ENCODE measurements at regions of chr10 and their contacts with region 1.

Region 1: GRCh38 chr10:73167783-73168464 is at the starts of genes ECD and FAM149B1:
- DNase-seq: peak; percentile 96
- ATAC-seq: peak; percentile 94
- H3K4me3 Mint-ChIP-seq: peak within 1 kb of the TSS; percentile 100
- H3K27ac Mint-ChIP-seq: peak within 1 kb of the TSS; percentile 100
- H3K4me1 Mint-ChIP-seq: peaks cover 37% of the 10 kb centered on the region
- H3K27me3 Mint-ChIP-seq: no peaks in the 10 kb centered on the region
- total RNA-seq, gene ECD: 41.0 to 50.7 TPM
- total RNA-seq, gene FAM149B1: 16.0 to 18.6 TPM

Region 2: GRCh38 chr10:72625608-72626443 is 542.1 kb before region 1 on chr10 and contains the start of gene MICU1:
- CTCF ChIA-PET with region 1: no interaction called
- POLR2A ChIA-PET with region 1: no interaction called
- intact Hi-C with region 1: loop called in 1 of 2 experiments (anchors 10 kb)
- DNase-seq: peak; percentile 98
- ATAC-seq: peak; percentile 99
- H3K4me3 Mint-ChIP-seq: peak within 1 kb of the TSS; percentile 94
- H3K27ac Mint-ChIP-seq: peak within 1 kb of the TSS; percentile 91
- H3K4me1 Mint-ChIP-seq: peaks cover 7% of the 10 kb centered on the region
- H3K27me3 Mint-ChIP-seq: no peaks in the 10 kb centered on the region
- total RNA-seq, gene MICU1: 41.0 to 51.5 TPM

Region 3: DNA sequence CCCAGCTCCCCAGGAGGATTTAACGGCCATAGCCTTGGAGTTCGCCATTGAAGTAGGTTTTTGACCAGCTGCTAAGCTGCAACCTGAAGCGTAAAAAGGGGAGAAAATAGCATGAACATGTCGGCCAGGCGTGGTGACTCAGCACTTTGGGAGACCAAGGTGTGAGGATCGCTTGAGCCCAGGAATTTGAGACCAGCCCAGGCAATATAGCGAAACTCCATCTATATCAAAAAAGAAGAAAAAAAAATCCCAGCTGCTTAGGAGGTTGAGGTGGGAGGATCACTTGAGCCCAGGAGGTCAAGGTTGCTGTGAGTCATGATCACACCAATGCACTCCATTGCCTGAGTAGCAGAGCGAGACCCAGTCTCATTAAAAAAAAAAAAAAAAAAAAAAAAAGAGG is 508.2 kb before region 1 on chr10:
- CTCF ChIA-PET with region 1: no interaction called
- POLR2A ChIA-PET with region 1: no interaction called
- intact Hi-C with region 1: no loop called
- DNase-seq: no peak
- ATAC-seq: no peak
- H3K4me3 Mint-ChIP-seq: no peak overlapping the region
- H3K27ac Mint-ChIP-seq: no peak overlapping the region
- H3K4me1 Mint-ChIP-seq: no peaks in the 10 kb centered on the region
- H3K27me3 Mint-ChIP-seq: peaks cover 2% of the 10 kb centered on the region

Region 4: DNA sequence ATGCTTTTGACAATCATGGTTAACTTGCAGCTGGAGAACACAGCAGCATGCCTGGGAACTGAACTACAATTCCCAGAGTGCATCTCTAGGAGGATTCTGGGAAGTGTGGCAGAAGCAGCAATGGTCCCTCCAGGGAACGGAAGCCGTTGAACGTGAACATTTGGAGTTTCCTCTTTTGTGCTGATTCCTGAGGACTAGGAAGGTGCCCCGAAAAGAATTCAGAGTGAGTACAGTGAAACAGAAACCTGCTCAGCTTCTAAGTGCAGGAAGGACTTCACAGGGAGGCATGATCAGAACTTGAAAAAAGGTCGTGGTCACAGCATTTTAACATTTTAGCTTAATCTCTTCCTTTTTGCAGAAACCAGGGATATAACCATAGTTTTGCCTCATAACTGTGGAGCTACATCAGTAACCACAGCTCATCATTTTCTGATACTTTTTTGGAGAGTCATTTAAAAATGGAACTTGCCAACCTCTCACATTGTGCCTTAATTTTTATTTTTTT is 57.5 kb before region 1 on chr10 and contains the start of gene NUDT13:
- CTCF ChIA-PET with region 1: no interaction called
- POLR2A ChIA-PET with region 1: interaction called, 3 read pairs
- intact Hi-C with region 1: loop called in 1 of 2 experiments (anchors 5 kb)
- DNase-seq: peak; percentile 60
- ATAC-seq: peak; percentile 89
- H3K4me3 Mint-ChIP-seq: peak within 1 kb of the TSS; percentile 71
- H3K27ac Mint-ChIP-seq: peak within 1 kb of the TSS; percentile 90
- H3K4me1 Mint-ChIP-seq: peaks cover 14% of the 10 kb centered on the region
- H3K27me3 Mint-ChIP-seq: no peaks in the 10 kb centered on the region
- total RNA-seq, gene NUDT13: 1.6 to 2.2 TPM

Region 5: DNA sequence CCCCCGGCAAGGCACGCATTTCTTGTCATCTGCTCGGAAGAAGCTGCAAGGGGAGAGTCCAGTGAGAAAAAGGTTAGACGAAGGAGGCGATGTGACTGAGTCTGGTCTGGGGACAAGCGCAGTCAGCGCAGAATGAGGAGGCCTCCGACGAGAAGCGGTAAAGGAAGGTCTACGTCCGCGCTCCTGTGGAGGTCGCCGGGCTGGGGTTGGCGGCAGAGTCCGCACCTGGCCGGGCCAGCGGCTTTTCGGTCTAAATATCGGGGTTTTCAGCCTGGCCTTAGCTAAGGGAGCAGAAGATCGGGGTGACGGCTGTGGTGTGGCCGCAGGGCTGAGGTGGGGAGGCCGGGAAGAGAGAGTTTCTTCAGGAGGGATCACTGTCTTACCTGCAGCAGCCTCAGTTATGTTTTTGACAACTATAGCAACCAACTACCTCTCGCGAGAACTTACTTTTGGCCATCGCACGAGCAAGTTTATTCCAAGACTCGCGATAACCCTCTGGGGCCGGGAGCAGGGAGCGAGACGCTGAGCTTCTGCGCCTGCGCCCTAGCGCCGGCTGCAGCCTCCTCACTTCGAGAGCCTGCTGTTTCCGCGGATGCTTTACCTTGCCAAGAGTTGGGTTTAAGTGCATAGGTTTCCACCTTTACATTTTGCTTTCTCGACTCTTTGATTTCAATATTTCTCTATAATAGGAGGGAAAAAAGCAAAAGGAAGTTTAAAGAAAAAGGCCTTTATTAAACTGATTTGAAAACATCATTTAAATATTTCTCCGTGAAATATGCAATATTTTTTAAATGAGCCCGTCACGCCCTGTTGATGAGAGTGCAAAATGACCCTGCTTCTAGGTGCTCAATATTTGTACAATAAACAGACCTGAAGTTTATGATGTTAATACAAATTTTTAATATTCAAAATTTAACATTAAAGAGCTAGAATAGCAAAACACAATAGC is 190.7 kb after region 1 on chr10 and contains the start of gene CFAP70:
- CTCF ChIA-PET with region 1: no interaction called
- POLR2A ChIA-PET with region 1: no interaction called
- intact Hi-C with region 1: loop called in 1 of 2 experiments (anchors 5 kb)
- DNase-seq: peak; percentile 96
- ATAC-seq: peak; percentile 100
- H3K4me3 Mint-ChIP-seq: peak within 1 kb of the TSS; percentile 97
- H3K27ac Mint-ChIP-seq: peak within 1 kb of the TSS; percentile 84
- H3K4me1 Mint-ChIP-seq: peaks cover 14% of the 10 kb centered on the region
- H3K27me3 Mint-ChIP-seq: no peaks in the 10 kb centered on the region
- total RNA-seq, gene CFAP70: 0.58 to 0.71 TPM

Region 6: DNA sequence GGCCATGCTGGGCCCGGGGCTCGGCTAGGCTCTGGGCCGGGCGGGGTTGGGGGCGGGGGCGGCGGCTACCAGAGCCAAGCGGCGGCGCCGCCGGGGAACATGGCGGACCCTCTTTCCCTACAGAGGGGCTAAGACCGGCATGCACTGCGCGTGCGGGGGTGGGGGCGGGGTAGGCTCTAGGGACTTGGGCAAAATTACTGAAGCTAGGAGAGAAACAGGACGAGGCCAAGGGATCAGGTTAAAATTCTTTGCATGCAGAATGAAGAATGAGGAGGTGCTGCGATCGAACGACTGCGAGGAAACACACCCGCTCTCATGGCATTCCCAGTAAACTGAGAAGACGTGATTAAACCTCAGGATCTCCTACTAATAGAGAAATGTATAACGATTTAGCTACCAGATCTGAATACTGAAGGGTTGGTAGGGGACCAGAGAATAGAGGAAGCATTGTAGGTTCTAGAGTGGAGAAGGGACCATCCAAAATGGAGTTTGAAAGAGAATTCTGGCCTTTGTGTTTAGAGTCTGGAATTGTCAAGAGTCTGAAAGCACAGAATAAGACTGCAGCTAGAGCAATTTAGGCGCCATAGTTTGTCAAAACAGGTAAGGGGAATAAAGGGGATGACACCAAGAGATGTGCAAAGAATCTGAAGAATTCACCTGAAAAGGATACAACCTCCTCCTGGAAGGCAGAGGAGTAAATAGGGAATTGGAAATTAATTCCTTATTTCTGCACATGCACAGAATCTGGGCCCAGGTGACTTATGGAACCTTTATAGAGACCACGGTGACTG is 328.2 kb after region 1 on chr10 and contains the start of gene PPP3CB:
- CTCF ChIA-PET with region 1: no interaction called
- POLR2A ChIA-PET with region 1: no interaction called
- intact Hi-C with region 1: loop called in 1 of 2 experiments (anchors 5 kb)
- DNase-seq: peak; percentile 96
- ATAC-seq: peak; percentile 81
- H3K4me3 Mint-ChIP-seq: peak within 1 kb of the TSS; percentile 91
- H3K27ac Mint-ChIP-seq: peak within 1 kb of the TSS; percentile 99
- H3K4me1 Mint-ChIP-seq: peaks cover 45% of the 10 kb centered on the region
- H3K27me3 Mint-ChIP-seq: no peaks in the 10 kb centered on the region
- total RNA-seq, gene PPP3CB: 42.3 to 45.3 TPM

Region 7: GRCh38 chr10:73730153-73730906 is 562.4 kb after region 1 on chr10:
- CTCF ChIA-PET with region 1: no interaction called
- POLR2A ChIA-PET with region 1: no interaction called
- intact Hi-C with region 1: loop called in 1 of 2 experiments (anchors 1 kb)
- DNase-seq: peak; percentile 95
- ATAC-seq: peak; percentile 93
- H3K4me3 Mint-ChIP-seq: peak overlapping the region; percentile 98
- H3K27ac Mint-ChIP-seq: peak overlapping the region; percentile 97
- H3K4me1 Mint-ChIP-seq: peaks cover 9% of the 10 kb centered on the region
- H3K27me3 Mint-ChIP-seq: no peaks in the 10 kb centered on the region

Measured in activated CD4-positive, alpha-beta T cell treated with anti-CD3 and anti-CD28 coated beads for 36 hours (primary cell).